IMR-90 (cell line): ENCODE measurements at regions of chr2 and their contacts with region 1.

Region 1: DNA sequence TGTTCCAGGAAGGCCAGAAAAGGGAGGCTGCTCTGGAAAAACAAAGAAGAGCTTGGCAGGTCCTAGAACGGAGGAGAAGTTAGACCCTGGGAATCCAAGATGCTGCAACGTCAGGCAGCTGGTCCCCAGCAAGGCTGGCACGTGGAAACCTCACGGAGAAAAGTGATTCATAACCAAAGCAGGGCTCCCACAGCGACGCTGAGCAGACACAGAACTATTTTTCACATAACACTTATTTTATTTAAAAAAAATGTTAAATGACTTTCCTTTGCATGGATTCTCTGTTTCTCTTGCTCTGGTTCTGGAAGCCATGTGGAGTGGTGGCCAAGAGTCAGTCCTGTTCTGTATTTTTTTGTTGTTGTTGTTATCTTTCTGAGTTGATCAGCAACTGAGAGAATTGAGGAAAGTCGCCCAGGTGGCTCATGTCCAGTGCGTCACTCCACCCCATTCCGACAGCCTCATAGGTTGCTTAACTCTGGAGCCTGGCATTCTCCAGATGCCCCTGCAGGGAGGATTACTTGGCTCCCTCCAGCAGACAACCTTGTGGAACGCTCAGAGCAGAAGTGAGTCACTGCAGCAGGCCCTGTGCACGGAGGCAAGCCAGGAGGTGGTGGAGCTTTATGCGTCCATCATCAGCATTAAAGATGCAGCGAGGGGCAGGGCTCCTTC is 229.9 kb upstream of the HDAC4 start:
- DNase-seq: peak; percentile 42
- ATAC-seq: peak; percentile 79
- H3K4me3 ChIP-seq: no peak overlapping the region
- H3K27ac ChIP-seq: no peak overlapping the region
- H3K4me1 ChIP-seq: no peaks in the 10 kb centered on the region
- H3K27me3 ChIP-seq: no peaks in the 10 kb centered on the region
- CTCF ChIP-seq: no peak
- POLR2A ChIP-seq: no peak
- RAD21 ChIP-seq: no peak

Region 2: GRCh38 chr2:239499726-239500573 is 130.8 kb before region 1 on chr2:
- CTCF ChIA-PET with region 1: no interaction called
- POLR2A ChIA-PET with region 1: interaction called, 18 read pairs
- dilution Hi-C with region 1: no loop called
- in situ Hi-C with region 1: no loop called
- intact Hi-C with region 1: no loop called
- DNase-seq: no peak
- ATAC-seq: no peak
- H3K4me3 ChIP-seq: no peak overlapping the region
- H3K27ac ChIP-seq: no peak overlapping the region
- H3K4me1 ChIP-seq: no peaks in the 10 kb centered on the region
- H3K27me3 ChIP-seq: no peaks in the 10 kb centered on the region; the same call in 1 of the 2 replicates
- CTCF ChIP-seq: no peak
- POLR2A ChIP-seq: no peak
- RAD21 ChIP-seq: no peak